B cell (primary cell): ENCODE measurements at regions of chr20 and their contacts with region 1.

Region 1: GRCh38 chr20:31951530-31952453 is at the start of gene PDRG1:
- DNase-seq: peak; percentile 97
- ATAC-seq: peak; percentile 98
- H3K4me3 ChIP-seq: peak within 1 kb of the TSS; percentile 65 to 91 (median 86)
- H3K4me3 Mint-ChIP-seq: peak within 1 kb of the TSS; percentile 99
- H3K27ac ChIP-seq: peak within 1 kb of the TSS; percentile 56 to 88
- H3K27ac Mint-ChIP-seq: peak within 1 kb of the TSS; percentile 98
- H3K4me1 ChIP-seq: peaks cover 14 to 18% of the 10 kb centered on the region in 2 donors
- H3K4me1 Mint-ChIP-seq: peaks cover 28% of the 10 kb centered on the region
- H3K27me3 ChIP-seq: no peaks in the 10 kb centered on the region
- H3K27me3 Mint-ChIP-seq: peaks cover 18% of the 10 kb centered on the region
- CTCF ChIP-seq: peak; percentile 83
- total RNA-seq, gene PDRG1: 10.9 and 12.7 TPM in 2 replicates

Region 2: GRCh38 chr20:31845300-31845863 is 106.4 kb before region 1 on chr20 and contains the start of gene FOXS1:
- CTCF ChIA-PET with region 1: interaction called, 187 read pairs
- POLR2A ChIA-PET with region 1: no interaction called
- intact Hi-C with region 1: no loop called
- DNase-seq: no peak
- ATAC-seq: no peak
- H3K4me3 ChIP-seq: no peak within 1 kb of the TSS
- H3K4me3 Mint-ChIP-seq: no peak within 1 kb of the TSS
- H3K27ac ChIP-seq: no peak within 1 kb of the TSS
- H3K27ac Mint-ChIP-seq: no peak within 1 kb of the TSS
- H3K4me1 ChIP-seq: peaks cover 0 to 6% of the 10 kb centered on the region in 2 donors
- H3K4me1 Mint-ChIP-seq: peaks cover 8% of the 10 kb centered on the region
- H3K27me3 ChIP-seq: peaks cover 0 to 3% (median 0%) of the 10 kb centered on the region in 4 experiments
- H3K27me3 Mint-ChIP-seq: peaks cover 13% of the 10 kb centered on the region
- CTCF ChIP-seq: no peak
- total RNA-seq, gene FOXS1: not detected in 2 replicates

Region 3: GRCh38 chr20:31879143-31879987 is 72.4 kb before region 1 on chr20:
- CTCF ChIA-PET with region 1: interaction called, 15 read pairs
- POLR2A ChIA-PET with region 1: no interaction called
- intact Hi-C with region 1: loop called (anchors 1 kb)
- DNase-seq: peak; percentile 92
- ATAC-seq: peak; percentile 89
- H3K4me3 ChIP-seq: peak overlapping the region; percentile 62 to 75 (median 66)
- H3K4me3 Mint-ChIP-seq: peak overlapping the region; percentile 97
- H3K27ac ChIP-seq: peak overlapping the region in 1 of 2 donors; percentile 71
- H3K27ac Mint-ChIP-seq: peak overlapping the region; percentile 97
- H3K4me1 ChIP-seq: peaks cover 8 to 11% of the 10 kb centered on the region in 2 donors
- H3K4me1 Mint-ChIP-seq: peaks cover 13% of the 10 kb centered on the region
- H3K27me3 ChIP-seq: no peaks in the 10 kb centered on the region
- H3K27me3 Mint-ChIP-seq: no peaks in the 10 kb centered on the region
- CTCF ChIP-seq: no peak

Region 4: DNA sequence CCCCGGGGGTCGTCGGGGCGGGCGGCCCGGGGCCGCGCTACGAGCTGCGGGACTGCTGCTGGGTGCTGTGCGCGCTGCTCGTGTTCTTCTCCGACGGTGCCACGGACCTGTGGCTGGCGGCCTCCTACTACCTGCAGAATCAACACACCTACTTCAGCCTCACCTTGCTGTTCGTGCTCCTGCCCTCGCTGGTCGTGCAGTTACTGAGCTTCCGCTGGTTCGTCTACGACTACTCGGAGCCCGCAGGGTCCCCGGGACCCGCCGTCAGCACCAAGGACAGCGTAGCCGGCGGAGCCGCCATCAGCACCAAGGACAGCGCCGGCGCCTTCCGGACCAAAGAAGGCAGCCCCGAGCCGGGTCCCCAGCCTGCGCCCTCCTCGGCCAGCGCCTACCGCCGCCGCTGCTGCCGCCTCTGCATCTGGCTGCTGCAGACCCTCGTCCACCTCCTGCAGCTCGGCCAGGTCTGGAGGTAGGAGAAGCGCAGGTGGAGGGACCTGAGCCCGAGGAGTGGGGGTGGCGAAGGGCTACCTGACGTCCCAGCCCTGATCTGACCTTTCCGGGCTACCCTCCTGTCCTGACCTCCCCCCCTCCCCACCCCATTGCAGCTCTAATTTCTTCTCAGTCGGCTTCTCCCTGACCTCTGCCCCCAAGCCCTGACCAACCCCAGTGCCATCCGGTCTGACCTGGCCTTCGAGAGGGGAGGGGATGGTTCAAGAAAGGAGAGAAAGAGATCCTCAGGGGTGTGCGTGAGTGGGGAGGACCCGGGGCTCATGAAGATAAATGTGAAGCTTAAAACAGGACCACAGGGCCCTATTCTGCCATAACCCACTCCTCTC is 16.7 kb after region 1 on chr20:
- CTCF ChIA-PET with region 1: interaction called, 16 read pairs
- POLR2A ChIA-PET with region 1: no interaction called
- intact Hi-C with region 1: loop called (anchors 1 kb)
- DNase-seq: peak; percentile 88
- ATAC-seq: peak; percentile 92
- H3K4me3 ChIP-seq: peak overlapping the region in 4 of 5 experiments; percentile 13 to 42 (median 28)
- H3K4me3 Mint-ChIP-seq: peak overlapping the region; percentile 90
- H3K27ac ChIP-seq: no peak overlapping the region
- H3K27ac Mint-ChIP-seq: no peak overlapping the region
- H3K4me1 ChIP-seq: peaks cover 6 to 11% of the 10 kb centered on the region in 2 donors
- H3K4me1 Mint-ChIP-seq: peaks cover 11% of the 10 kb centered on the region
- H3K27me3 ChIP-seq: peaks cover 0 to 48% (median 18%) of the 10 kb centered on the region in 4 experiments
- H3K27me3 Mint-ChIP-seq: peaks cover 63% of the 10 kb centered on the region
- CTCF ChIP-seq: no peak

Region 5: GRCh38 chr20:32031007-32031958 is 79.5 kb after region 1 on chr20:
- CTCF ChIA-PET with region 1: interaction called, 11 read pairs
- POLR2A ChIA-PET with region 1: no interaction called
- intact Hi-C with region 1: no loop called
- DNase-seq: peak; percentile 78
- ATAC-seq: peak; percentile 75
- H3K4me3 ChIP-seq: peak overlapping the region in 4 of 5 experiments; percentile 18 to 55 (median 40)
- H3K4me3 Mint-ChIP-seq: peak overlapping the region; percentile 65
- H3K27ac ChIP-seq: no peak overlapping the region
- H3K27ac Mint-ChIP-seq: no peak overlapping the region
- H3K4me1 ChIP-seq: peaks cover 7 to 25% of the 10 kb centered on the region in 2 donors
- H3K4me1 Mint-ChIP-seq: peaks cover 22% of the 10 kb centered on the region
- H3K27me3 ChIP-seq: peaks cover 0 to 21% (median 9%) of the 10 kb centered on the region in 4 experiments
- H3K27me3 Mint-ChIP-seq: peaks cover 35% of the 10 kb centered on the region
- CTCF ChIP-seq: peak; percentile 100

Region 6: DNA sequence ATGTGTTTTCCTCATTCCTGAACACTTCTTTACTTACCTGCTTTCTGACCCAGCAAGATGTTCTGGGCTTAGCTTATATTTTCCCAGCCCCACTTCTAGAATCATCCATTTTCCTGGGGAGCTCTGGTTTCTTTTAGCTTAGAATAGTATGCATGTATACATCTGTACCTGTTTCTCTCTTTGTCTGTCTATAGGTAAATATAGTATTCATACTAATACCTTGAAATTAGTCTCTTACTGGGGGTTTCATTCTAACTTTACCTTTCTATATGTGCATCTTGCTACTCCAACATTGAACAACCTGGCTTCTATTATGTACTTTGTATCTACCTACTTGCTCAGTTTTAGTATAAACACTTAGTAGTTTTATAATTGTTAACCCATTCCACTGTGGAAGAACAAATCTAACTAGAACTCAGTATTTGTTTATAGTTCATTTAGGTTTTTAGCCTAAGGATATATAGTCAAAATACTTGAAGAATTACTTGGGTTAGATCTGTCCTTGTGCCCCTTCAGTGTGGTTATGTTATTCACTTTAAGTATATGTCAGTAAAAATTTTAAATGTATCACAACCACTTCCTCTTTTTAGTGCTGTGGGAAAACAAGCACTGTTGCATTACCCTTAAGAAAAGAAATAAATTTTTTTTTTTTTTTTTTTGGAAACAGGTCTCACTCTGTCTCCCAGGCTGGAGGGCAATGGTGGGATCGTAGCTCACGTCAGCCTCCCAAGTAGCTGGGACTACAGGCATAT is 460.3 kb after region 1 on chr20:
- CTCF ChIA-PET with region 1: no interaction called
- POLR2A ChIA-PET with region 1: no interaction called
- intact Hi-C with region 1: no loop called
- DNase-seq: peak; percentile 50
- ATAC-seq: peak; percentile 54
- H3K4me3 ChIP-seq: peak overlapping the region in 1 of 5 experiments; percentile 15
- H3K4me3 Mint-ChIP-seq: peak overlapping the region; percentile 21
- H3K27ac ChIP-seq: peak overlapping the region in 1 of 2 donors; percentile 48
- H3K27ac Mint-ChIP-seq: peak overlapping the region; percentile 58
- H3K4me1 ChIP-seq: peaks cover 22% of the 10 kb centered on the region in 2 donors
- H3K4me1 Mint-ChIP-seq: peaks cover 48% of the 10 kb centered on the region
- H3K27me3 ChIP-seq: no peaks in the 10 kb centered on the region
- H3K27me3 Mint-ChIP-seq: no peaks in the 10 kb centered on the region
- CTCF ChIP-seq: no peak